Activated CD4-positive, alpha-beta T cell treated with anti-CD3 and anti-CD28 coated beads, Interleukin-2, amount 10 ng/mL, durations not matched to agents 24 days and 14 days (primary cell): ENCODE measurements at regions of chr2 and their contacts with region 1.

Region 1: GRCh38 chr2:74458132-74458925 is at the start of gene WBP1:
- DNase-seq: peak; percentile 99
- H3K4me3 Mint-ChIP-seq: peak within 1 kb of the TSS; percentile 100
- H3K27ac Mint-ChIP-seq: peak within 1 kb of the TSS; percentile 100
- H3K4me1 Mint-ChIP-seq: peaks cover 54% of the 10 kb centered on the region
- H3K27me3 Mint-ChIP-seq: no peaks in the 10 kb centered on the region
- total RNA-seq, gene WBP1: 28.8 and 29.0 TPM in 2 replicates

Region 2: DNA sequence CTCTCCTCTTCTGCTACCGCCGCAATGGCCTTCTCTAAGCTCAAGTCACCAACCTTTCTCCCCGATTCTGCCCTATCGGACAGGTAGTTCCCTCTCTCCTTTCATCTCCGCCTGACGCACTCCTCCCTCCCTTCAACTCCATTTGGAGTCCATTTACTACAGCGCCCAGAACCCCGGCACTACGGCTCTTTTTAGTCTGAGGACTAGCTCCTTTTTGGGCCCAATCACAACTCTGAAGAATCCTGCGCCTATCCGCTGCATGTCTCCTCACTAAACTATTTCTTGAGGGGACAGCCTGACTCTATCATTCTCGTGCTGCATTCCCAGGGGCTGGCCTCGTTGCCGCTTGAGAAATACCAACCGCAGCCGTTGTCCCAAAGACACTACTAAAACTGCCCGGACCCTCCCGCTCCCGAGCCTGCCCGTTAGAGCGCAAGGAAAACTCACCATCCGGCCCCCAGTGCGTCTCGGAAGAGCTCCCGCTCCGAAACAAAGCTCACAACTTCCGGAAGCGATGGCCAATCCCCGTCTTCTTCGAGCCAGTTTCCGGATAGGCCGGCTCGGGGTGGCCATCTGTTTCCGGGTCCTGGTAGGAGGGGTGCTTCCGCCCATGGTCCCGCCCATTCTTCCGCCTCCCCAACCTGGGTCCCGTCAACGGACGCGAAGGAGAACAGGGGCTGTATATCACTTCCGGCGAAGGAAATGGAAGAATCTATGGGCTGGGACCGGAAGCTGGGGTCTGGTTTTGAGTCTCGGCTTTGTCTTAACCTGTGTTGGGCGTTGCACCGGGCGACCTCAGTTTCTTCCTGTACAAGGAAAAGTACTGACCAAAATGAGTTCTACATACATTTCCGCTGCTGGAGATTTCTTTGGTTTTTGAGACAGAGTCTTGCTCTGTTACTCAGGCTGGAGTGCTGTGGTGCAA is 721.2 kb before region 1 on chr2 and contains the start of gene TPRKB:
- intact Hi-C with region 1: loop called (anchors 1 kb)
- DNase-seq: peak; percentile 98
- H3K4me3 Mint-ChIP-seq: peak within 1 kb of the TSS; percentile 100
- H3K27ac Mint-ChIP-seq: peak within 1 kb of the TSS; percentile 91
- H3K4me1 Mint-ChIP-seq: peaks cover 10% of the 10 kb centered on the region
- H3K27me3 Mint-ChIP-seq: no peaks in the 10 kb centered on the region
- total RNA-seq, gene TPRKB: 37.6 and 38.5 TPM in 2 replicates

Region 3: DNA sequence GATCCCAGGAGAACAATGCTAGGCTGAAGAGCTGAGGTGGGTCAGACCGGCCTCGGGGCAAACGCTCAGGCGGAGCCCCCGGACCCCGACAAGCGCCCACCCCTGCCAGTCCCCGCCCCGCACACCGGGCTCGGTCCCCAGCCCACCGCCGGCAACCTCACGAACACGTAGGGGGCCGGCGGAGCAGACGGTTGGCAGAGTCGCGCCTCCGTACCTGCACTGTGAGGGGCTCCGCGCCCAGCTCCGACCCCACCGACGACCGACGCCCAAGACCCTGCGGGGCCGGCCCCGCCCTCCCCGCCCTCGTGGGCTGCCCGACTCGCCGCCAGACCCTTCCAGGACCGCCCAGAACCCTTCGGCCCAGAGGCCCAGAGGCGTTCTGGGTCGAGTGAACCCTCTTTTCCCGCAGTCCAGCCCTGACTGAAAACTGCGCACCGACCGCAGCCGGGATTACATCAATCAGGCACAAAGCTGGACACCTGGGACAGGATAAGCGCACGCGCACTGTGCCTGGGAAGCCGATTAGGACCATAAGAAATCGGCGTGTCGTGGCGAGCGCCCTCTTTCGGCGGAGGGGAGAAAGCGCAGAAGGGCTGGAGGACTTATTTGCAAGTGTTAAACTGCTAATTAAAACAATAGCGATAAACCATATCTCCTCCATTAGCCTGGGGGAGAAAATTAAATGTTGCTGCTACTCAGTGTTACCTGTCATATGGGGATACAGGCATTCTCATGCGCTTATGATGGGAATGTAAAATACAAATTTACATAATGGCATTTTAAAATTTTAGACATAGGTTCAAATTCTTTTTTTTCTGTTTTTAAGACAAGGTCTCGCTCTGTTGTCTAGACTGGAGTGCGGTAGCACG is 66.5 kb before region 1 on chr2:
- intact Hi-C with region 1: loop called (anchors 1 kb)
- DNase-seq: peak; percentile 98
- H3K4me3 Mint-ChIP-seq: peak overlapping the region; percentile 93
- H3K27ac Mint-ChIP-seq: peak overlapping the region; percentile 98
- H3K4me1 Mint-ChIP-seq: peaks cover 8% of the 10 kb centered on the region
- H3K27me3 Mint-ChIP-seq: peaks cover 10% of the 10 kb centered on the region

Region 4: DNA sequence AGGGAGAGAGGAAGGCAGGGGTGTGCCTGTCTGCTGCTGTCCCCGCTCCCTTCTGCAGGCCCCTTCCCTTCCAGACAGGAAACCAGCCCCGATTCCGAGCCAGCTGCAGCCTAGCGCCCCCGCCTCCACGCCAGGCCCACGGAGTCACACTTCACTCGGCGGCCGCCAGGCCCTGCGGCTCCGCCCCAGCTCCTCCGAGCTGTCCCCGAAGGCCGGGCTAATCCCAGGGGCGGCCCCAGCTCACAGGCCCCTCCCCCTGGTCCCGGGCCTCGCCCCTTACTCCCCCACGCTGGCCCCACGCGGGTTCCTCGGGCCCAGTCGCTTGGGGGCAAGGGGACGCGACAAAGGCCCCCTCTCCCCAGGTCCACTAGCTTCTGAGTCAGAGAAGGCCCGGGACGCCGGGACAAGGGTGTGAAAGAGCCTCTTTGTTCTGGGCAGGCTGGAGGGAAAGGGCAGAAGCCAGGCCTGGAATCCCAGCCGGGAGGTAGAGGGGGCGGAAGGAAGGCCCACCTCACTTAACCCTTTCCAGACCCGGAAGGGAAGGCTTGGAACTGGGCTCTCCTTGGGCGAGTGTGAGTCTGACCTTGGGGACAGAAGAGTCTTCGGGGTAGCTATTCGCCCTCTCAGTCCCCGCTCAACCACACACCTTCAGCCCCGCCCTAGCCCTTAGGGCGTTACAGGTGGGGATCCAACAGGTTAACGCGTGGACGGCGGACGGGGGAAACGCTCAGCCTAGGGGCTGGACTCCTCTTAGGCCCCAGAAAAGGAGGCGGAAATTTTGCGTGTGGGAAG is 17.8 kb before region 1 on chr2:
- intact Hi-C with region 1: loop called (anchors 1 kb)
- DNase-seq: peak; percentile 83
- H3K4me3 Mint-ChIP-seq: peak overlapping the region; percentile 65
- H3K27ac Mint-ChIP-seq: no peak overlapping the region
- H3K4me1 Mint-ChIP-seq: peaks cover 13% of the 10 kb centered on the region
- H3K27me3 Mint-ChIP-seq: peaks cover 49% of the 10 kb centered on the region

Region 5: GRCh38 chr2:74482801-74483674 is 24.7 kb after region 1 on chr2 and contains the starts of genes CCDC142 and TTC31:
- intact Hi-C with region 1: loop called (anchors 1 kb)
- DNase-seq: peak; percentile 97
- H3K4me3 Mint-ChIP-seq: peak within 1 kb of the TSS; percentile 91
- H3K27ac Mint-ChIP-seq: peak within 1 kb of the TSS; percentile 99
- H3K4me1 Mint-ChIP-seq: peaks cover 33% of the 10 kb centered on the region
- H3K27me3 Mint-ChIP-seq: no peaks in the 10 kb centered on the region
- total RNA-seq, gene CCDC142: 26.5 and 26.9 TPM in 2 replicates
- total RNA-seq, gene TTC31: 27.1 and 31.5 TPM in 2 replicates

Region 6: DNA sequence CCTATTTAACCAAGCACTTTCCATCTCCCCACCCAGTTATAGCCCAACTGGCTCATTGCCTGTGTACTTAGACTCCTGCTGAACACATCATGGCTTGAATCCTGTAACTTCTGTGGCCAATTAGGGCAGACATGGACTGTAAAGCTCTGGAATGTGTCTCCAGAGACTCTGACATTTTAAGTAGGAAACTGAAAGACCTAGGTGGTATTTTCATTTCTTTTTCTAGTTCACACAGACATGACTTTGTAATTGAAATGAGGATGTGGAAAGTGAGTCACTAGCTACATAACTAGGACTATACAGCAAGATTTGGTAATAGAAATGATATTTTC is 108.4 kb after region 1 on chr2:
- intact Hi-C with region 1: no loop called
- DNase-seq: no peak
- H3K4me3 Mint-ChIP-seq: peak overlapping the region; percentile 70
- H3K27ac Mint-ChIP-seq: peak overlapping the region; percentile 83
- H3K4me1 Mint-ChIP-seq: peaks cover 40% of the 10 kb centered on the region
- H3K27me3 Mint-ChIP-seq: no peaks in the 10 kb centered on the region

Region 7: GRCh38 chr2:74608991-74609390 is 150.7 kb after region 1 on chr2:
- intact Hi-C with region 1: no loop called
- DNase-seq: peak; percentile 20
- H3K4me3 Mint-ChIP-seq: no peak overlapping the region
- H3K27ac Mint-ChIP-seq: no peak overlapping the region
- H3K4me1 Mint-ChIP-seq: peaks cover 3% of the 10 kb centered on the region
- H3K27me3 Mint-ChIP-seq: peaks cover 66% of the 10 kb centered on the region